Prostate gland (tissue), 2 donors: ENCODE measurements at regions of chr5 and their contacts with region 1.

Region 1: DNA sequence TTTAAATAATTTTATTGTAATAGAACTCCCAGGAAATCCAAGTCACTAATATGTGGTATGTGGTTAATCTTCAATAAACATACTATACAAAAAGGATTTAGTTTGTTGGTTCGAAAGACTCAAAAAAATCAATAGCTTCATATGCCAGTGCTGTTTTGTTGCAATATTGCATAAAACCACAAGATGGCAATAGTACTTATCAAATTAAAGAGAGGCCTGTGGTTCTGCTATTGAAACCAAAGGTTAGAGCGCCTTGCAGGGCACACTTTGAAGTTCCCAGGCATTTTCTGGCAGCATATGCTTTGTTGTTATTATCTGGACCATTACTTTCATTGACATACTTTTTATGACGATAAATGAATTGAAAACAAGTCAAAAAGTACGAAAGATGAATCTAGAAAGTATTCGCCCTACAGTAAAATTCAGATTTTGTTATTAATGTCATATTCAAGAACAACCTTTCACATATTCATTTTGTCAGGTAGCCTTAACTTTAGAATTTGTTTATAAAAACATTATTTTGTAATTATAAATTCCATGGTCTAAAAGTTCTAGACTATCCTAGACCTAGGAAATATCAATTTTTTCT is 316.3 kb downstream of the MCTP1 start:
- DNase-seq: peak; percentile 15
- H3K4me3 ChIP-seq: no peak overlapping the region
- H3K27ac ChIP-seq: no peak overlapping the region
- H3K4me1 ChIP-seq: no peaks in the 10 kb centered on the region
- H3K27me3 ChIP-seq: no peaks in the 10 kb centered on the region
- CTCF ChIP-seq: peak; percentile 43 to 77 (median 64)
- POLR2A ChIP-seq: no peak

Region 2: DNA sequence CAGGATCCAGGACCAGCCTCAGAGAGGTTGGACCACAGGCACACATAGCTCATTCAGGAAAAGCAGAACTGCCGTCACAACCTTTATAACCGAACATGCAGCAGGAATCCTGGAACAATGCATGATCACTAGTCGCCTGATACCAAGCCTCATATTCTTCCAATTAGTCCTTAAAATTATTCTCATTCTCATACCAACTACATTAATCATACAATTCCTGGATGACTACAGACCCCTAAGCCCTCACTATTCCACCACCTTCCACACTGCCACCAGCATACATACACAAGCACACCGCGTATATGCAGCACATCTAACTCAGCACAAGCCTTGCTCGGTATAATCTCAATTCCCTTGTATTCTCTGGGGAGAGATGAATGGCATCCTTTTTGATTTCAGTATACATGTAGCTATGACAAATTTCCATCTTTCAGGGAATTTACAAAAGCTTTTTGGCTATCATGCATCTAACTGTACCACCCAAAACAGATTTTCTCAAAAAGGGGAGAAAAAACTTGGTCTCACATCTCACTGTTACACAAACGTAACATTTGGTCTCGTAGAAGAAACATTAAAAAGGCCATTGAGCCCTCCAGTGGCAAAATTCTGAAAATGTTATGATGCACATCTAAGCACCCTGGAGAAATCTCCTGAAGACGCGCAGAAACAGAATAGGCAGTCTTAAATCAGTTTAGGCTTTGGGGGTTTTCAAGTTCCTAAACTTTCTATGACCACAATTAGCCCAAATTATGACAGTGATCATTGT is 270.1 kb after region 1 on chr5:
- intact Hi-C with region 1: loop called (anchors 1 kb)
- DNase-seq: no peak
- H3K4me3 ChIP-seq: no peak overlapping the region
- H3K27ac ChIP-seq: no peak overlapping the region
- H3K4me1 ChIP-seq: no peaks in the 10 kb centered on the region
- H3K27me3 ChIP-seq: peaks cover 2% of the 10 kb centered on the region
- CTCF ChIP-seq: peak in 1 of 4 experiments; percentile 22
- POLR2A ChIP-seq: no peak